HCT116 (cell line): ENCODE measurements at regions of chr6 and their contacts with region 1.

Region 1: GRCh38 chr6:97203343-97203742 is 79.7 kb downstream of the MMS22L start:
- DNase-seq: no peak
- ATAC-seq: no peak
- H3K4me3 ChIP-seq: no peak overlapping the region
- H3K27ac ChIP-seq: no peak overlapping the region
- H3K4me1 ChIP-seq: no peaks in the 10 kb centered on the region
- H3K27me3 ChIP-seq: no peaks in the 10 kb centered on the region
- CTCF ChIP-seq: no peak
- POLR2A ChIP-seq: no peak
- RAD21 ChIP-seq: no peak

Region 2: DNA sequence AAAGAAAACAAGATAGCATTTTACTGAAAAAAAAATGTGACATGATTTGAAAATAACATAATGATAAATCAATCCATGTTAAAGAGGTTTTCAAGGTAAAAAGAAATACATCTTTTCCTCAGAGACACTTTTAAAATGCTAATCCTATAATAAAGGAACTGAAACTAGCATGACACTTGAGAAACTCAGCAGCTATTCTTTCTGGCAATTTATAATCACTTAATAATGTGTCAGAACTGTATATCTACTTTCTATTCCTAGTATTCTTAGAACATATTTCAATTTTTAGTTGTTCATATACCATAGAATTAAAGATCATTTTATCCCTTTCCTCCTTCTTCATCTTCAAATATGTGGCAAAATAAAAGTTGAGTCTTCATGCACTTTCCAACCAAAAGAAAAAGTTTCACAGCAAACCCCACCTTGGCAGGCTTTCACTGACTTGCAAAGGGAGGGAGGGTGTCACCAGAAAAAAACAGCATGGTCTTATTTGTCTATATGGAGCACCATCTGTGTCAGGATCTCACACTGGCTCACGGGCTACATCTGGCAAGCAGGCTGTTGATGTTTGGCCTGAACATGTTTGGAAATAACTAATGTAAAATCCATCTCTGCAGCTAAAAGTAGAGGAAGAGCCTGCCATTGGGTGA is 591.9 kb before region 1 on chr6:
- CTCF ChIA-PET with region 1: no interaction called
- POLR2A ChIA-PET with region 1: no interaction called
- RAD21 ChIA-PET with region 1: no interaction called
- intact Hi-C with region 1: no loop called
- DNase-seq: no peak
- ATAC-seq: no peak
- H3K4me3 ChIP-seq: no peak overlapping the region
- H3K27ac ChIP-seq: no peak overlapping the region
- H3K4me1 ChIP-seq: no peaks in the 10 kb centered on the region
- H3K27me3 ChIP-seq: no peaks in the 10 kb centered on the region
- CTCF ChIP-seq: no peak
- POLR2A ChIP-seq: no peak
- RAD21 ChIP-seq: no peak

Region 3: DNA sequence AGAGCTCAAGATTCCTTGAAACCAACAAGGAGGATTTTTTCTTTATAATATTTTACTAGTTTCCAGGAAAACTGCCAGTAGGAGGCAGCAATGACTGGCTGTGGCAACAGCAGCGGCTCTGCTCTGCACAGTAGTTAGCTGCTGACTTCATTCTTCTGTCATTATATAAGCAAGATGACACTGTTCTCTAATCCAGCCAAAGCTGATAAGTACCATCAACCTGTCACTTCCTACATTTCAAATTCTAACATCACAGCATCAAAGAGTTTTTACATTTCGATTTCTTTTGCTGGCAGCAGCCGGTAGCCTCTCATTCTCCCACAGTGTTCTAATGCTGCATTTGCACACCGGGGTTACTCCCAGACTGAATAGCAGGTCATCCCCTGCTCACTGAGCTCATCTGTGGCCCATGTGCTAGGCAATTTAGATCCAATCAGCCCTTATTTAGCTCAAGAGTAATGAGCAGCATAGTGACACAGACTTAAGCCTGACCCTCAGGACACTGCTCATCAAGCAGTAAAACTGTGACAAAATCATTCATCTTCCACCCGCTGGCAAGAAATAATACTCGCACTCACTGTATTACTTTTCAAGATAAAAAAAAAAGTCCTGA is 11.9 kb after region 1 on chr6:
- CTCF ChIA-PET with region 1: interaction called, 31 read pairs
- POLR2A ChIA-PET with region 1: no interaction called
- RAD21 ChIA-PET with region 1: no interaction called
- intact Hi-C with region 1: no loop called
- DNase-seq: peak; percentile 12
- ATAC-seq: peak; percentile 69
- H3K4me3 ChIP-seq: no peak overlapping the region
- H3K27ac ChIP-seq: no peak overlapping the region
- H3K4me1 ChIP-seq: no peaks in the 10 kb centered on the region
- H3K27me3 ChIP-seq: no peaks in the 10 kb centered on the region
- CTCF ChIP-seq: peak; percentile 30 to 47 (median 41); a peak in 5 of 6 replicates
- POLR2A ChIP-seq: no peak
- RAD21 ChIP-seq: peak; percentile 61